Motor neuron (in vitro differentiated cells): ENCODE measurements at regions of chr1 and their contacts with region 1.

Region 1: GRCh38 chr1:61453111-61453961 is 271.6 kb downstream of the TM2D1 start:
- ATAC-seq: peak; percentile 92 to 99 (median 95)
- H3K4me3 ChIP-seq: no peak overlapping the region
- H3K27ac ChIP-seq: peak overlapping the region in 1 of 2 donors; percentile 59
- H3K4me1 ChIP-seq: peaks cover 31 to 40% of the 10 kb centered on the region in 2 donors

Region 2: GRCh38 chr1:61077676-61078541 is 375.4 kb before region 1 on chr1:
- in situ Hi-C with region 1: loop called in 3 of 9 experiments (anchors 25 kb)
- ATAC-seq: peak; percentile 57 to 71 (median 67)
- H3K4me3 ChIP-seq: peak overlapping the region; percentile 33 to 46 (median 42)
- H3K27ac ChIP-seq: peak overlapping the region in 1 of 2 donors; percentile 47
- H3K4me1 ChIP-seq: peaks cover 23% of the 10 kb centered on the region in 2 donors

Region 3: DNA sequence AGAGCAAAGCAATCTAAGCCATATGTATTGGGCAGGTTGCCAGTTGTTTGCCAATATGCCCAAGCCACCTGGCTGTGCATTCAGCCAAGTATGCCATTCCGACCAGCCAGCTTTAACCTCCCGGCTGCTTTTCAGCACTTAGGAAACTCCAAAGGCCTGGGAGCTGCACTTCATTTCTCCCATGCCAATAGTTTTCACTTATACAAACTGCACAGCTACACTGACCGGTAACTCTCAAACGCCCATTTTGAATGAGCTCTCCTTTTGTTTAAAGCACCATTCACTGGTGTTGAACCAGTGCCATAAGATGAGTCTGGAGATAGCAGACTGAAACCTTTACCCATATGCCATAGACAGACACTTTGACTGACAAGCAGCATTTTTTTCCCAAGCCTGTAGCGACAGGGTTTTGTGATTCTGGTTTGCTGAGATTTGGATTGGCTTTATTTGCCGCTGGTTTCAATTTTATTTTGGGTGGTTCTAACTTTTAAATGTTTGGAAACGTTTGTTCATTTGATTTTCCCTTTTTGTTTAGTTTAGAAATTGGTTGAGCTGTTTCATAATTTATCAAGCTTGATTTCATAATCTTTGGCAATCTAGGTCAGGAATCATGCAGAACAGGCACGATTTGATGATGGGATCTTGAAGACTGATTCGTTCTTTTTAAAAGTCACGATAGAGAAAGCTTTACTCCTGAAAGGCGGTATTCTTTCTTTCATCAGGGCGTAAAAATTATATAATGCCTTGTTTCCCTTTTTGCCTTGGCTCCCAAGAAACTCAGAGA is 226.4 kb before region 1 on chr1:
- in situ Hi-C with region 1: no loop called
- ATAC-seq: peak in 5 of 8 experiments; percentile 17 to 78 (median 59)
- H3K4me3 ChIP-seq: no peak overlapping the region
- H3K27ac ChIP-seq: no peak overlapping the region
- H3K4me1 ChIP-seq: peaks cover 0 to 9% of the 10 kb centered on the region in 2 donors

Region 4: GRCh38 chr1:61641578-61642336 is 188.4 kb after region 1 on chr1:
- in situ Hi-C with region 1: loop called in 1 of 9 experiments (anchors 25 kb)
- ATAC-seq: peak; percentile 53 to 100 (median 76)
- H3K4me3 ChIP-seq: no peak overlapping the region
- H3K27ac ChIP-seq: no peak overlapping the region
- H3K4me1 ChIP-seq: peaks cover 0 to 5% of the 10 kb centered on the region in 2 donors